ENCODE measurements at regions of chr10 and their contacts with region 1.

Region 1: GRCh38 chr10:3785257-3785850 is 345 bp upstream of the KLF6 start:
- DNase-seq: peak; percentile 99
- ATAC-seq: peak; percentile 83
- H3K4me3 Mint-ChIP-seq: peak overlapping the region; percentile 93
- H3K27ac Mint-ChIP-seq: peak overlapping the region; percentile 99
- H3K4me1 Mint-ChIP-seq: peaks cover 34% of the 10 kb centered on the region
- H3K27me3 Mint-ChIP-seq: no peaks in the 10 kb centered on the region
- CTCF ChIP-seq: no peak

Region 2: GRCh38 chr10:3757638-3758490 is 27.5 kb before region 1 on chr10:
- CTCF ChIA-PET with region 1: interaction called, 5 read pairs
- POLR2A ChIA-PET with region 1: interaction called, 77 read pairs
- intact Hi-C with region 1: no loop called
- DNase-seq: peak; percentile 78
- ATAC-seq: peak; percentile 81
- H3K4me3 Mint-ChIP-seq: peak overlapping the region; percentile 59
- H3K27ac Mint-ChIP-seq: peak overlapping the region; percentile 98
- H3K4me1 Mint-ChIP-seq: peaks cover 79% of the 10 kb centered on the region
- H3K27me3 Mint-ChIP-seq: no peaks in the 10 kb centered on the region
- CTCF ChIP-seq: no peak

Region 3: GRCh38 chr10:3805791-3806461 is 20.6 kb after region 1 on chr10:
- CTCF ChIA-PET with region 1: interaction called, 4 read pairs
- POLR2A ChIA-PET with region 1: interaction called, 281 read pairs
- intact Hi-C with region 1: loop called (anchors 2 kb)
- DNase-seq: peak; percentile 70
- ATAC-seq: no peak
- H3K4me3 Mint-ChIP-seq: peak overlapping the region; percentile 45
- H3K27ac Mint-ChIP-seq: no peak overlapping the region
- H3K4me1 Mint-ChIP-seq: peaks cover 68% of the 10 kb centered on the region
- H3K27me3 Mint-ChIP-seq: no peaks in the 10 kb centered on the region
- CTCF ChIP-seq: no peak

Region 4: DNA sequence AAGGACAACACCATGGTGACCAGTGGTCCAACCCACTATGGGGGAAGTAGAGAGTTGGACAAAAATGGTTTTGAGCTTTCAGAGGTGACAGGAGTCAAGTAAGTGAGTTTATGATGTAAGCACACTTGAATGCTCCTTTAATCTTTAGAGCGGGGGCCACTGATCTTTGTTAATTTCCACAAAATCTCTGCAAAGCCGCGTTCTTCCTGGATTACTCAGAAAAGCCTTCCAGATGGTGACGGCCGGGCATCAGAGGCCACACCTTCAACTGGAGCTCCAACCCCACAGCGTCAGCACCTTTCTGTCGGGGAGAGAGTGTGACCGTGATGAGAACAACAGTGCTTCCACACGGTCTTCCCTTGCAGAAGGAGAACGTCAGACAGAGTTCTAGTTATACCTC is 34.9 kb after region 1 on chr10:
- CTCF ChIA-PET with region 1: no interaction called
- POLR2A ChIA-PET with region 1: interaction called, 11 read pairs
- intact Hi-C with region 1: no loop called
- DNase-seq: no peak
- ATAC-seq: no peak
- H3K4me3 Mint-ChIP-seq: no peak overlapping the region
- H3K27ac Mint-ChIP-seq: no peak overlapping the region
- H3K4me1 Mint-ChIP-seq: peaks cover 13% of the 10 kb centered on the region
- H3K27me3 Mint-ChIP-seq: no peaks in the 10 kb centered on the region
- CTCF ChIP-seq: no peak

Region 5: DNA sequence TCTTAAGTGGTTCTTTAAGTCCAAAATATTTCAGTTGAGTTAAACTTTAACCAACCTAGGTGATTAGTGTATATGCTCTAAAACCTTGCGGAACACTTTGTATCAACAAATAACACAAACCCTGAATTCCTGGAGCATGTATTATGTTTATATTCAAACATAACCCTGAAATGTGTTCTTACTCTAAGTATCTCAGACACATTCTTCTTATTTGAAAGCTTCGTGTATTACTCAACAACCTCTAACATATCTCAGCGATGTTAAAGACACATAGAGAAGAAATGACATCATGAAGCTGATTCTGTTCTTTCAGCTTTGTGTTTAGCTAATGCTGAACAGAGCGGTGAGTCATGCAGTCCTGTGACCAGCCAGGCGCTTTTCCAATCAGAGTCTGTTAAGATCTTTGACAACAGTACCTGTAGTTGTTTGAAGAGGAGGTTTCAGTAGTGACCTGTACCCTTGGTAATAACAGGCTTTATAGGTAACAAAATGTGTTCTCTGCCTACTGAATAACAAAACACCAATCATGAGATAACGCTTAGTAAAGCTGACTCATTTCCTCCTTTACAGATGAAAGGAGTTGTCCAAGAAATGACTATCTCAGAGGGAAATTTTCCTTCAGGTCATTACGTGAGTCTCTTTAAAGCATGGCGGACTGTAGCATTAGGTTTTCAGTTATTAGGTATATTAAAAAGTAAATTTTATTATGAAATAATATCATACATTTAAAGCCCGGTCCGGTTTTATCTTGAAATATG is 67.0 kb after region 1 on chr10:
- CTCF ChIA-PET with region 1: interaction called, 4 read pairs
- POLR2A ChIA-PET with region 1: interaction called, 77 read pairs
- intact Hi-C with region 1: no loop called
- DNase-seq: peak; percentile 85
- ATAC-seq: peak; percentile 92
- H3K4me3 Mint-ChIP-seq: peak overlapping the region; percentile 36
- H3K27ac Mint-ChIP-seq: peak overlapping the region; percentile 91
- H3K4me1 Mint-ChIP-seq: peaks cover 47% of the 10 kb centered on the region
- H3K27me3 Mint-ChIP-seq: no peaks in the 10 kb centered on the region
- CTCF ChIP-seq: no peak

Region 6: GRCh38 chr10:3874988-3875841 is 89.9 kb after region 1 on chr10:
- CTCF ChIA-PET with region 1: no interaction called
- POLR2A ChIA-PET with region 1: interaction called, 56 read pairs
- intact Hi-C with region 1: no loop called
- DNase-seq: peak; percentile 37
- ATAC-seq: peak; percentile 61
- H3K4me3 Mint-ChIP-seq: peak overlapping the region; percentile 0
- H3K27ac Mint-ChIP-seq: peak overlapping the region; percentile 75
- H3K4me1 Mint-ChIP-seq: peaks cover 37% of the 10 kb centered on the region
- H3K27me3 Mint-ChIP-seq: no peaks in the 10 kb centered on the region
- CTCF ChIP-seq: no peak

Region 7: DNA sequence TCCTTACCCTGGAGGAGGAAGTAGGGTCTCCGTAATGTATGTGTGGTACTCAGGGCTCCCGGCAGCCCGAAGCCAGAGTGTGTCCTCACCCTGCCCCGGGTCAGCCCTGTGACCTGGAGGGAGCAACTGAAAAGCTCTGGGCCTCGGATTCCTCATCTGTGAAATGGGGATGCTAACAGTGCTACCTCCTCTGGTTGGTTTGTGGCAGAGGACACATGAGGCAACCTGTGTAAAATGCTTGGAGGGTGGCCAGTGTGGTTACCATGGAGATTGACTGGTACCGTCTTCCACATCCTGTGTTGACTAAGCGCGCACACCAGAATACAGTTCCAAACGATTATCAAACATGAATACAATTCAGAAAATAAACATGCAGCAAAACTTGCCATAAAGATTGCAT is 163.5 kb after region 1 on chr10:
- CTCF ChIA-PET with region 1: no interaction called
- POLR2A ChIA-PET with region 1: interaction called, 16 read pairs
- intact Hi-C with region 1: no loop called
- DNase-seq: peak; percentile 92
- ATAC-seq: peak; percentile 82
- H3K4me3 Mint-ChIP-seq: peak overlapping the region; percentile 49
- H3K27ac Mint-ChIP-seq: peak overlapping the region; percentile 80
- H3K4me1 Mint-ChIP-seq: peaks cover 62% of the 10 kb centered on the region
- H3K27me3 Mint-ChIP-seq: no peaks in the 10 kb centered on the region
- CTCF ChIP-seq: no peak

Region 8: DNA sequence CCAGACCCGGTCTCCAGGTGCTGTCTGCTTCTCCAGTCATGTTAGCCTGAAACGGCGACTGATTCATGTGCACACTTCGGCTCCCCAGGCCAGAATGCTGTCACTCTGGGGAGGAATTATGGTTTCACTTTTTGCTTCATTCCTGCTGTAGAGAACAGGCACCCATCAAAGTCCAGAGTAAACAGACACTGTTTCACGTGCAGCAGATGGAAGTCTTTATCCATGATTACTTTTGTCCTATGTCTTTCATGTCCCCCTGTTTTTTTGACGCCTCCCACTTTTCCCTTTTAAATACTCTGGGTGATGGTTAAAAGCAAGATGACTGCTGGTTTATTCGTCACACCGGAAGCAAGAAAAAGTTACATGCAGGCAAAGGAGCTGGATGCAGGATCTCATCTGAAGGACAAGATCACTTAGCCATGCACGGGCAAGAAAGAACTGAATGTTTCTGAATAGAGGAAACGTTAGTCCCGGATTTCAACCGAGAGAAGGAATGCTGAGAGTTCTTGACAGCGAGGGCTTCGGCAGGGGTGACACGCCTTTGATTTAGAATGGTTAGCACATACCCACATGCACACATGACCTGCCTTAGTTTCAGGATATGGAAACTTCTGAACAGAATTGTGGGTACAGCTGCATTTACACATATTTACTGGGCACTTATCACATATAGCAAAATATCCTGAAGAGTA is 249.7 kb after region 1 on chr10:
- CTCF ChIA-PET with region 1: no interaction called
- POLR2A ChIA-PET with region 1: no interaction called
- intact Hi-C with region 1: no loop called
- DNase-seq: peak; percentile 35
- ATAC-seq: peak; percentile 40
- H3K4me3 Mint-ChIP-seq: peak overlapping the region; percentile 37
- H3K27ac Mint-ChIP-seq: peak overlapping the region; percentile 19
- H3K4me1 Mint-ChIP-seq: peaks cover 30% of the 10 kb centered on the region
- H3K27me3 Mint-ChIP-seq: no peaks in the 10 kb centered on the region
- CTCF ChIP-seq: no peak